CD4-positive, alpha-beta memory T cell (primary cell): ENCODE measurements at regions of chr3 and their contacts with region 1.

Region 1: DNA sequence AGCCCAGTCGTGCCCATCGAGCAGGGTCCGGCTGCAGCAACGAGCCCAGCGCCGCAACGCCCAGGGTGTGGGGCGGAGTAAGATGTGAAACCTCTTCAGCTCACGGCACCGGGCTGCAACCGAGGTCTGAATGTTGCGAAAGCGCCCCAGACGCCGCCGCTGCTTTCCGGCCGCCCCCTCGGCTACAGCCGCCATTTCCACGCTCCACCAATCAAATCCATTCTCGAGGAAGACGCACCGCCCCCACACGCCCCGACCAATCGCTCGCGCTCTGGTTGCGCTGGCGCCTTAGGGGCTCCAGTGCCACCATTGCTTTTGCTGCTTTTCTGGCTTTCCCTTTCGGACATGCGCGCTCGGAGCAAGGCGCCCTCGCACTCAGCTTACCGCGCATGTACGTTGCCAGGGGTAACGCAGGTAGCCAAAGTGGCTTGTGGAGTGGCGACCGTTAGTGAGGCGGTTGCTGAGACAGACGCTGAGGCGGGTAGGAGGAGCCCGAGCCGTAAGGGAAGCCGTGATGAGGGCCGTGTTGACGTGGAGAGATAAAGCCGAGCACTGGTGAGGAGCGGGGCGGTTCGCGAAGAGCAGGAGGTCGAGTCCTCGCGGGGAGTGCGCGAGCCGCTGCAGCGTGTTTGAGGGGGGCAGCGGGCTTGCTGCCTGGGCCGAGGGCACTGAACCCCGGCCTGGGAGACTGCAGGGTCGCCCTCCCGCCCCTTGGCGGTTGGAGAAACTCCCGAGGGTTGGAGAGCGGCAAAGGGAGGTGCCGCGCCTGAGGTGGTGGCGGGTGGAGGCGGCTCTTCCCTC is at the starts of genes IFT122 and MBD4:
- DNase-seq: peak; percentile 98 to 100 (median 100)
- H3K4me3 ChIP-seq: peak within 1 kb of the TSS; percentile 98 to 100
- H3K4me3 Mint-ChIP-seq: peak within 1 kb of the TSS; percentile 90 to 99 (median 94)
- H3K27ac ChIP-seq: peak within 1 kb of the TSS; percentile 91
- H3K27ac Mint-ChIP-seq: peak within 1 kb of the TSS; percentile 94 to 99 (median 98)
- H3K4me1 ChIP-seq: peaks cover 73% of the 10 kb centered on the region
- H3K4me1 Mint-ChIP-seq: peaks cover 45 to 81% (median 68%) of the 10 kb centered on the region in 4 donors
- H3K27me3 ChIP-seq: no peaks in the 10 kb centered on the region
- H3K27me3 Mint-ChIP-seq: no peaks in the 10 kb centered on the region
- total RNA-seq, gene IFT122: 20.0 to 21.8 TPM
- total RNA-seq, gene MBD4: 52.4 to 58.0 TPM

Region 2: DNA sequence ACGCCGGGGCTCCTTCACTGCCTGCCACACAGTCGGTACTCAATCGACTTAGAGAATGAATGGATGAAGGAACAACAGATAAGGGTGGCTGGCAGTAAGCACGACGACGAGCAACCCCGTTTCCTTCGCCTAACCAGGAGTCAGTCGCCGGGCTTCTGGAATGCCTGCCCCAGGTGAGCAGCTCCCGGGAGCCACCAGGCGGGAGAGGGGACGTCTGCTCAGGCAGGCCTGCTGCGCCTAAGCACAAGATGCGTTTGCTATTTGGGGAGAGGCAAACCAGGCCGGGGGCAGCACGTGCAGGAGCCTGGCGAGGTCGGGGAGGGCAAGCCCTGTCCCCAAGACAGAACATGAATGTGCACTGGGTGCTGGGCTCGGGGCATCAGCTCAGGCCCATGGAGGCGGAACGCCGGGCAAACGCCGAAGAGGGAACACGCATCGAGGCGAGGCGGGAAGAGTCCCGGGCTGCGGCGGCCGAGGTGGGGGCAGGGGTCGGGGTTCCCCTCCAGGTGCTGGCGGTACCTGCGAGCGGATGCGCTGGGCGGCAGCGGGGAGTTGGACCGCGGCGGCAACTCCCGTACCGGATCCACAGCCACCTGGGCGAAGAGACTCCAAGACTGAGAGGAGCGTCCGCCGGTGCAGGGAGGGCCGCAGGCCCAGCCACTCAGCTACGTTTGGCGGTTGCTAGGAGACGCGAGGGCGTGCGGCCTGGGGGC is 446.4 kb before region 1 on chr3 and contains the start of gene CFAP92:
- CTCF ChIA-PET with region 1: no interaction called
- POLR2A ChIA-PET with region 1: no interaction called
- intact Hi-C with region 1: loop called (anchors 1 kb)
- DNase-seq: peak; percentile 89 to 92 (median 91)
- H3K4me3 ChIP-seq: peak within 1 kb of the TSS in 1 of 2 donors; percentile 42
- H3K4me3 Mint-ChIP-seq: peak within 1 kb of the TSS; percentile 68 to 85 (median 78)
- H3K27ac ChIP-seq: peak within 1 kb of the TSS; percentile 40
- H3K27ac Mint-ChIP-seq: peak within 1 kb of the TSS; percentile 30 to 91 (median 83)
- H3K4me1 ChIP-seq: peaks cover 14% of the 10 kb centered on the region
- H3K4me1 Mint-ChIP-seq: peaks cover 5 to 28% (median 16%) of the 10 kb centered on the region in 4 donors
- H3K27me3 ChIP-seq: no peaks in the 10 kb centered on the region
- H3K27me3 Mint-ChIP-seq: no peaks in the 10 kb centered on the region
- total RNA-seq, gene CFAP92: 0.38 TPM in 1 of 2 experiments, not detected in the other

Region 3: DNA sequence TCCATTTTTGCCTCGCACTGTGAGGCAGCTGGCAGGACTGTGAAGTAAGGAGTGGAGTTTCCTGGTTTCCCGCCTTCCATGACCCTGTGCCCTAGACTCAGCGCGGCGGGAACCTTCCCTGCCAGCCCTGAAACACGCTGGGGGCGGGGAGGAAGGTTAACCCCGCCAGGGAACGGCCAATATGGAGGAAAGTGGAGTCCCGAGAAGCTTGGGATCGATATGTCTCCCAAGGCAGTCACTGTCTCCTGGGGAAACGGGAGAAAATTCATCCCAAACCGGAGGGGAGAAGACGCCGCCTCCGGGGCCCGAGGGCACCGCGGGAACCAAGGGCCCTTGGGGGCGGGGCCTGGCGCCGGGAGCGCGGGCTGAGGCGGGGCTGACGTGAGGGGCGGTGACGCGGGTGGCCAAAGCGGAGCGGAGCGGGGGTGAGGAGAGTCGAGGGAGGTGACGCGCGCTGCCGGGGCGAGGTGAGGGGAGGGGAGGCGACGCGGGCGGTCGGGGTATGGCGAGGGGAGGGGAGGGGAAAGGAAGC is 161.5 kb before region 1 on chr3 and contains the start of gene HMCES:
- CTCF ChIA-PET with region 1: no interaction called
- POLR2A ChIA-PET with region 1: interaction called, 3 read pairs
- intact Hi-C with region 1: loop called (anchors 1 kb)
- DNase-seq: peak; percentile 93 to 97 (median 95)
- H3K4me3 ChIP-seq: peak within 1 kb of the TSS; percentile 69 to 85
- H3K4me3 Mint-ChIP-seq: peak within 1 kb of the TSS; percentile 94 to 99 (median 98)
- H3K27ac ChIP-seq: peak within 1 kb of the TSS; percentile 99
- H3K27ac Mint-ChIP-seq: peak within 1 kb of the TSS; percentile 90 to 100 (median 99)
- H3K4me1 ChIP-seq: peaks cover 44% of the 10 kb centered on the region
- H3K4me1 Mint-ChIP-seq: peaks cover 22 to 50% (median 38%) of the 10 kb centered on the region in 4 donors
- H3K27me3 ChIP-seq: no peaks in the 10 kb centered on the region
- H3K27me3 Mint-ChIP-seq: no peaks in the 10 kb centered on the region
- total RNA-seq, gene HMCES: 50.1 to 52.5 TPM

Region 4: DNA sequence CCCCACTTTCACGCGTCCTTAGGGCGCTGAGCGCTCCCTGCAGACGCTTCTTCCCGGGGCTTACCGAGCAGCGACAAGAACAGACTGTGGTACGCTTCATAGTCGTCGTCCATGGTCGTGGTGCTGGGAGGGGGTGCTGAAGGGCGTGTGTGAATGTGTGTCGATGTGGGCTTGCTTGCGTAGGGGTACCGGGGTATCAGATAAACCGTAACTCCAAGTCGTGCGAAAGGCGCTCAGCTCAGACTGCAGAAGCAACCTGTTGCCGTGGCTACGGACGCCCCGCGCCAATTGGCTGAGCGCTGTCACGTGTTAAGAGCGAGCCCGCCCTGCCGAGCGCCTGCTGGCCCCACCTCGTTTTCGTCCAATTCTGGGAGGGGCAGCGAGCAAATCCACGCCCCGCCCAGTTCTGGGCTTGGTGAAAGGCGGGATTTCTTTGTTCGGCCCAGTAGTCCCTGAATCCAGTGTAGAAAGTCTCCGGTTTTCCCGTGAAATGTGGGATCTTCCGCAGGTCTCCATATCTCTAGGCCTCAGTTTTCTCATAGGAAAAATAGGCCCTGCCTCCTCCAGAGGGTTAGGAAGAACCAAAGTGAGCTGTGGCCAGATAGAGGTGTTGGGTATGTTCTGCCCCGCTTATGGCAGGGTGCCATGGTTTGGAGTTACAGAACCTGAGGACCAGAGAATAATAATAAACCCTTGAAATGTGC is 11.5 kb before region 1 on chr3 and contains the start of gene EFCAB12:
- CTCF ChIA-PET with region 1: no interaction called
- POLR2A ChIA-PET with region 1: interaction called, 56 read pairs
- intact Hi-C with region 1: loop called (anchors 1 kb)
- DNase-seq: peak; percentile 84 to 90 (median 87)
- H3K4me3 ChIP-seq: peak within 1 kb of the TSS; percentile 49 to 50
- H3K4me3 Mint-ChIP-seq: peak within 1 kb of the TSS; percentile 86 to 91 (median 88)
- H3K27ac ChIP-seq: peak within 1 kb of the TSS; percentile 19
- H3K27ac Mint-ChIP-seq: peak within 1 kb of the TSS; percentile 79 to 93 (median 89)
- H3K4me1 ChIP-seq: peaks cover 15% of the 10 kb centered on the region
- H3K4me1 Mint-ChIP-seq: peaks cover 12 to 22% (median 18%) of the 10 kb centered on the region in 4 donors
- H3K27me3 ChIP-seq: no peaks in the 10 kb centered on the region
- H3K27me3 Mint-ChIP-seq: no peaks in the 10 kb centered on the region
- total RNA-seq, gene EFCAB12: 1.5 to 1.6 TPM

Region 5: GRCh38 chr3:129481766-129482332 is 41.8 kb after region 1 on chr3:
- CTCF ChIA-PET with region 1: no interaction called
- POLR2A ChIA-PET with region 1: interaction called, 10 read pairs
- intact Hi-C with region 1: loop called (anchors 1 kb)
- DNase-seq: peak; percentile 74 to 84 (median 83)
- H3K4me3 ChIP-seq: no peak overlapping the region
- H3K4me3 Mint-ChIP-seq: peak overlapping the region in 7 of 8 donors; percentile 2 to 67 (median 38)
- H3K27ac ChIP-seq: peak overlapping the region; percentile 54
- H3K27ac Mint-ChIP-seq: peak overlapping the region; percentile 89 to 98 (median 96)
- H3K4me1 ChIP-seq: peaks cover 14% of the 10 kb centered on the region
- H3K4me1 Mint-ChIP-seq: peaks cover 10 to 25% (median 14%) of the 10 kb centered on the region in 4 donors
- H3K27me3 ChIP-seq: no peaks in the 10 kb centered on the region
- H3K27me3 Mint-ChIP-seq: no peaks in the 10 kb centered on the region

Region 6: DNA sequence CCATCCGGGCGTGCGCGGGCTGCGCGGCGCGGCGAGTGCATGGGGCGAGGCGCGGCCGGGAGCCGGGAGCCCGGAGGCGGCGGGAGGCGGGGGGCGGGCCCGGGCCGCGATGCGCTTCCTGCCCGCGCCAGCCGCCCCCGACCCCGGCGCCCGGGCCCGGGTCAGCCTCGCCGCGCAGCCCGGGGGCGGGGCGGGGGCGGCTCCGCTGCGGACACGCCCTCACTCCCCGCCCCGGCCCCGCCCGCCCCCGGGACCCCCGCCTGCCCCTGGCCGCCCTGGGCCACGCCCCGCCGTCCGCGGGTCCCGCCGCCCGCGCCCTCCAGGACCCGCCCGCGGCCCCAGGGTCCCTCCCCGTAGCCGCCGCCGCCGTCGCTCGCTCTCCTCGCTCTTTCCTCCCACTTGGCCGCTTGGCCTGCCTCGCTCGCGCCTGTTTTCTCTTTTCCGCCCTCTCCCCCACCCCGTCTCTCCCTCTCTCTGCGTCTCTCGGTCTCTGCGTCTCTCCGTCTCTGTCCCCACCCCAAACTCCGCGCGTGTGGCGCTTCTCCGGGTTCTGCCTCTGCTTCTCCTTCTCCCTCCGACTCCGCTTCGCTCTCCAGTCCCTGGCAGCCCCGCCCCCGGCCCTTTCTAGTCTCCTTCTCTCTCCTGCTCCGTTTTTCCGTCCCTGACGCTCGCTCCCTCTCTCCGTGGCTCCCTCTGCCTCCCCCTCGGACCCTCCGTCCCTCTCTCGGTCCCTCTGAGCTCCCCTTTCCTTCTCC is 166.8 kb after region 1 on chr3 and contains the start of gene PLXND1:
- CTCF ChIA-PET with region 1: no interaction called
- POLR2A ChIA-PET with region 1: interaction called, 21 read pairs
- intact Hi-C with region 1: loop called (anchors 2 kb)
- DNase-seq: peak in 4 of 5 donors; percentile 36 to 55 (median 46)
- H3K4me3 ChIP-seq: peak within 1 kb of the TSS in 1 of 2 donors; percentile 62
- H3K4me3 Mint-ChIP-seq: peak within 1 kb of the TSS; percentile 91 to 99 (median 95)
- H3K27ac ChIP-seq: no peak within 1 kb of the TSS
- H3K27ac Mint-ChIP-seq: peak within 1 kb of the TSS; percentile 81 to 99 (median 93)
- H3K4me1 ChIP-seq: peaks cover 28% of the 10 kb centered on the region
- H3K4me1 Mint-ChIP-seq: peaks cover 21 to 50% (median 32%) of the 10 kb centered on the region in 4 donors
- H3K27me3 ChIP-seq: no peaks in the 10 kb centered on the region
- H3K27me3 Mint-ChIP-seq: peaks cover 2 to 4% of the 10 kb centered on the region in 2 donors
- total RNA-seq, gene PLXND1: 71.4 to 72.5 TPM

Region 7: DNA sequence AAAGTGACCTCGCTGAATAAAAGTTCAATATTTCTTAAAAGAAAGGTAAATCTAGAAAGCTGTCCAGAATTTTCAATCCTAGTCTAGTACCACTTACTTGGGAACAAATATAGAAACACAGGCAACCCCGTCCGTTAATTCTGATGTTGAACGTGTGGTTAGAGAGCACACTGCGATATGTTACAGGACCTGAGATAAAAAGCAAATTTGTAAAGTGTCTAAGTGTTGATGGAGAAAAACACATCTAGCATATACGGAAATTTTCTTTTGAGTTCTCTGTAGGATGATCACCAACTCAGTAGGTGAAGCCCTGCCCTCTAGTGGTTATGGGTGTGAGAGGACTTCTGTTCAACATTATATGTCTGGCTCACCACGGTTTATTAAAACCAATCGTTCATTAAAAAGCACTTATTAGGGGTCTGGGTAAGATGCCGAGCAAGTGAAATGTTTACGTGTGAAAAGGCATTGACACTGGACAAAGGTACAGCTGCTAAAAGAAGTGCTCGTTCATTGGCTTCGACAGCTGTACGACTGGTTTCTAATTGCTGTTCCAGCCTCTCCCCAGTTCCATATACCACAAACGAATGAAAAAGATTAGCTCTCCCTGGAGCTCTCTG is 1452.8 kb after region 1 on chr3:
- CTCF ChIA-PET with region 1: no interaction called
- POLR2A ChIA-PET with region 1: no interaction called
- intact Hi-C with region 1: loop called (anchors 5 kb)
- DNase-seq: peak; percentile 75 to 80 (median 76)
- H3K4me3 ChIP-seq: peak overlapping the region; percentile 79 to 99
- H3K4me3 Mint-ChIP-seq: peak overlapping the region; percentile 95 to 99 (median 98)
- H3K27ac ChIP-seq: peak overlapping the region; percentile 99
- H3K27ac Mint-ChIP-seq: peak overlapping the region; percentile 99 to 100 (median 100)
- H3K4me1 ChIP-seq: peaks cover 29% of the 10 kb centered on the region
- H3K4me1 Mint-ChIP-seq: peaks cover 27 to 47% (median 32%) of the 10 kb centered on the region in 4 donors
- H3K27me3 ChIP-seq: no peaks in the 10 kb centered on the region
- H3K27me3 Mint-ChIP-seq: peaks cover 0 to 1% of the 10 kb centered on the region in 2 donors